Esophagus muscularis mucosa (tissue), 4 donors: ENCODE measurements at regions of chr22 and their contacts with region 1.

Region 1: GRCh38 chr22:20249797-20250354 is 18.2 kb downstream of the RTN4R start:
- DNase-seq: no peak
- H3K4me3 ChIP-seq: no peak overlapping the region
- H3K27ac ChIP-seq: peak overlapping the region in 2 of 4 donors; percentile 8 to 61
- H3K4me1 ChIP-seq: peaks cover 11 to 24% (median 19%) of the 10 kb centered on the region in 4 donors
- H3K27me3 ChIP-seq: no peaks in the 10 kb centered on the region
- CTCF ChIP-seq: no peak
- EP300 ChIP-seq: no peak
- POLR2A ChIP-seq: no peak

Region 2: GRCh38 chr22:20061481-20061861 is 188.4 kb before region 1 on chr22:
- intact Hi-C with region 1: no loop called
- DNase-seq: no peak
- H3K4me3 ChIP-seq: no peak overlapping the region
- H3K27ac ChIP-seq: no peak overlapping the region
- H3K4me1 ChIP-seq: no peaks in the 10 kb centered on the region
- H3K27me3 ChIP-seq: no peaks in the 10 kb centered on the region
- CTCF ChIP-seq: no peak
- EP300 ChIP-seq: no peak
- POLR2A ChIP-seq: no peak

Region 3: DNA sequence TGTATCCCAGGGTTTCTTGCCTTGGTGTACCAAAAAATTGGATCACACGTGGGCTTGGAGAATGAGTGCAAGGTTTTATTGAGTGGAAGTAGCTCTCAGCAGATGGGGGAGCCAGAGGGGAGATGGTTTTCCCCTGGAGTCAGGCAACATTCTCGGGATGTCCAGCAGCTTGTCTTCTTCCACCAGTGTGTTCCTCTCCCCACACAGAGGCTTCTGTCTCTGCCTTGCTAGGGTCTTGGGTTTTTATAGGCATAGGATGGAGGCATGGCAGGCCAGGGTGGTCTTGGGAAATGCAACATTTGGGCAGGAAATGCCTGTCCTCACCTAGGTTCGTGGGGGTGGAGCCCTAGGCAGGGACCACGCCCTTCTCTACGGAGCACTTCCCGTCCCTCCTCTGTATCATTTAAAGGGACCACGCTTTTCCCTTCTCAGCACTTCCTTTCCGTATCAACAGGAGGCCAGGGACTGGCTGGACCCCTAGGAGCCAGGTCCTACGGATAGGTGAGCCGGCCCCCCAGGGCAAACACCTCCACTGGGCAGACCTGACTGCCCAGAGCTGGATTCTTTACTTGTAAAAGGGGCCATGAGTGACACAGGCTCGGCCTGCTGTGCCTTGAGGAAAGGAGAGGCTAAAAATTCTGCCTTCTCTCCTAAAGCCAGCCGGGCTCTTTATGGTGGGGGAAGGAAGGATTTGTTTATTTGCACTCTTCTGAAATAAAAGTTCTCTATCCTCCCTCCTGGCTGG is 43.7 kb before region 1 on chr22:
- intact Hi-C with region 1: loop called (anchors 5 kb)
- DNase-seq: no peak
- H3K4me3 ChIP-seq: peak overlapping the region; percentile 52 to 62 (median 55)
- H3K27ac ChIP-seq: peak overlapping the region; percentile 61 to 75 (median 72)
- H3K4me1 ChIP-seq: peaks cover 46 to 60% (median 53%) of the 10 kb centered on the region in 4 donors
- H3K27me3 ChIP-seq: peaks cover 0 to 10% (median 0%) of the 10 kb centered on the region in 4 donors
- CTCF ChIP-seq: peak in 1 of 3 experiments; percentile 10
- EP300 ChIP-seq: no peak
- POLR2A ChIP-seq: no peak